ENCODE measurements at regions of chr10 and their contacts with region 1.

Region 1: GRCh38 chr10:61750929-61751471 is 88.3 kb downstream of the CABCOCO1 start:
- DNase-seq: peak; percentile 98
- ATAC-seq: peak; percentile 83
- H3K4me3 ChIP-seq: no peak overlapping the region
- H3K27ac ChIP-seq: peak overlapping the region; percentile 48
- H3K4me1 ChIP-seq: peaks cover 26% of the 10 kb centered on the region
- H3K27me3 ChIP-seq: no peaks in the 10 kb centered on the region
- CTCF ChIP-seq: peak; percentile 100

Region 2: GRCh38 chr10:61733358-61733940 is 17.6 kb before region 1 on chr10:
- CTCF ChIA-PET with region 1: interaction called, 18 read pairs
- POLR2A ChIA-PET with region 1: no interaction called
- intact Hi-C with region 1: no loop called
- DNase-seq: peak; percentile 96
- ATAC-seq: peak; percentile 88
- H3K4me3 ChIP-seq: no peak overlapping the region
- H3K27ac ChIP-seq: no peak overlapping the region
- H3K4me1 ChIP-seq: no peaks in the 10 kb centered on the region
- H3K27me3 ChIP-seq: 0 out of 2 replicates have a peak, but pooled peaks cover 7% of the 10 kb centered on the region
- CTCF ChIP-seq: peak; percentile 100

Region 3: GRCh38 chr10:61793760-61794703 is 43.0 kb after region 1 on chr10:
- CTCF ChIA-PET with region 1: interaction called, 5 read pairs
- POLR2A ChIA-PET with region 1: no interaction called
- intact Hi-C with region 1: loop called (anchors 2 kb)
- DNase-seq: peak; percentile 72
- ATAC-seq: peak; percentile 82
- H3K4me3 ChIP-seq: no peak overlapping the region
- H3K27ac ChIP-seq: no peak overlapping the region
- H3K4me1 ChIP-seq: peaks cover 23% of the 10 kb centered on the region
- H3K27me3 ChIP-seq: no peaks in the 10 kb centered on the region
- CTCF ChIP-seq: no peak

Region 4: GRCh38 chr10:61896854-61897661 is 146.1 kb after region 1 on chr10:
- CTCF ChIA-PET with region 1: interaction called, 49 read pairs
- POLR2A ChIA-PET with region 1: no interaction called
- intact Hi-C with region 1: loop called (anchors 1 kb)
- DNase-seq: peak; percentile 91
- ATAC-seq: no peak; the same call in 1 of the 2 replicates
- H3K4me3 ChIP-seq: no peak overlapping the region
- H3K27ac ChIP-seq: no peak overlapping the region
- H3K4me1 ChIP-seq: peaks cover 38% of the 10 kb centered on the region
- H3K27me3 ChIP-seq: no peaks in the 10 kb centered on the region
- CTCF ChIP-seq: peak; percentile 99

Region 5: GRCh38 chr10:62384057-62384446 is 633.1 kb after region 1 on chr10:
- CTCF ChIA-PET with region 1: no interaction called
- POLR2A ChIA-PET with region 1: no interaction called
- intact Hi-C with region 1: loop called (anchors 10 kb)
- DNase-seq: peak; percentile 100
- ATAC-seq: peak; percentile 74
- H3K4me3 ChIP-seq: peak overlapping the region; percentile 36
- H3K27ac ChIP-seq: peak overlapping the region; percentile 79
- H3K4me1 ChIP-seq: peaks cover 88% of the 10 kb centered on the region
- H3K27me3 ChIP-seq: no peaks in the 10 kb centered on the region
- CTCF ChIP-seq: no peak

Region 6: GRCh38 chr10:63083904-63084689 is 1333.1 kb after region 1 on chr10:
- CTCF ChIA-PET with region 1: no interaction called
- POLR2A ChIA-PET with region 1: no interaction called
- intact Hi-C with region 1: no loop called
- DNase-seq: peak; percentile 99
- ATAC-seq: peak; percentile 95
- H3K4me3 ChIP-seq: no peak overlapping the region
- H3K27ac ChIP-seq: no peak overlapping the region
- H3K4me1 ChIP-seq: peaks cover 14% of the 10 kb centered on the region
- H3K27me3 ChIP-seq: no peaks in the 10 kb centered on the region
- CTCF ChIP-seq: peak; percentile 100

Measured in PC-3 (cell line).